B cell (primary cell): ENCODE measurements at regions of chr6 and their contacts with region 1.

Region 1: DNA sequence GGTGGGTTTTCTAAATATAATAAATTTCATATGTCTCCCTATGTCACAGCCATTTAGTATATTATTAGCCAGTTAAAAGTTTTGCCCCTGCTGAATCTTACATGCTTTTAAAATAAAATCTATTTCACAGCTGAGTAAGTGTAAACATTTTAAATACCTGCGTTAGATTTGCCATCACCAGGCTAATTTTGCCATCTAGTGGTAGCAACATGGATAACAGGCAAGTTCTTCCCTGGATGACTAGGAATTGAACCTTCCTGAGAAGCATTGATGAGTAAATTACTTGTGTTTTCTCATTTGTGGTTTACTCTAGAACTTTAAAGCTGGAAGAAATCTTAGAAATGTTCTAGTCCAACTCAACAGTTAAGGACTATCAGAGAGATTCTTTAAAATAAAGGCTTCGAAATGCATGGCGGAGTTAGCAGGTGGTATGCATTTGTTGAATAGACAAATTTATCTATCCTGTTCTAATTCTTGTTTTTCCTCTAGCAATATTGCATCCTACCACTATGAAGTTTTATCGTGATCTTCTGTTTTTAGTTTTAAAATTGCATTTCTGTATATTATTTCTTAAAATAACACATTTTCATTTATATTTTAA is 2.6 kb downstream of the PRSS35 start:
- DNase-seq: peak; percentile 40
- ATAC-seq: no peak
- H3K4me3 ChIP-seq: no peak overlapping the region
- H3K4me3 Mint-ChIP-seq: no peak overlapping the region
- H3K27ac ChIP-seq: no peak overlapping the region
- H3K27ac Mint-ChIP-seq: no peak overlapping the region
- H3K4me1 ChIP-seq: peaks cover 9 to 11% of the 10 kb centered on the region in 2 donors
- H3K4me1 Mint-ChIP-seq: peaks cover 13% of the 10 kb centered on the region
- H3K27me3 ChIP-seq: peaks cover 0 to 18% (median 9%) of the 10 kb centered on the region in 4 experiments
- H3K27me3 Mint-ChIP-seq: peaks cover 40% of the 10 kb centered on the region
- CTCF ChIP-seq: peak; percentile 91

Region 2: GRCh38 chr6:83221889-83222479 is 293.0 kb before region 1 on chr6:
- CTCF ChIA-PET with region 1: interaction called, 12 read pairs
- POLR2A ChIA-PET with region 1: no interaction called
- intact Hi-C with region 1: loop called (anchors 2 kb)
- DNase-seq: peak; percentile 40
- ATAC-seq: no peak
- H3K4me3 ChIP-seq: no peak overlapping the region
- H3K4me3 Mint-ChIP-seq: no peak overlapping the region
- H3K27ac ChIP-seq: no peak overlapping the region
- H3K27ac Mint-ChIP-seq: no peak overlapping the region
- H3K4me1 ChIP-seq: no peaks in the 10 kb centered on the region
- H3K4me1 Mint-ChIP-seq: no peaks in the 10 kb centered on the region
- H3K27me3 ChIP-seq: peaks cover 0 to 3% (median 0%) of the 10 kb centered on the region in 4 experiments
- H3K27me3 Mint-ChIP-seq: peaks cover 11% of the 10 kb centered on the region
- CTCF ChIP-seq: peak; percentile 68

Region 3: GRCh38 chr6:84017709-84018452 is 502.9 kb after region 1 on chr6:
- CTCF ChIA-PET with region 1: no interaction called
- POLR2A ChIA-PET with region 1: no interaction called
- intact Hi-C with region 1: no loop called
- DNase-seq: no peak
- ATAC-seq: no peak
- H3K4me3 ChIP-seq: no peak overlapping the region
- H3K4me3 Mint-ChIP-seq: no peak overlapping the region
- H3K27ac ChIP-seq: no peak overlapping the region
- H3K27ac Mint-ChIP-seq: no peak overlapping the region
- H3K4me1 ChIP-seq: no peaks in the 10 kb centered on the region
- H3K4me1 Mint-ChIP-seq: no peaks in the 10 kb centered on the region
- H3K27me3 ChIP-seq: no peaks in the 10 kb centered on the region
- H3K27me3 Mint-ChIP-seq: peaks cover 17% of the 10 kb centered on the region
- CTCF ChIP-seq: no peak